CD8-positive, alpha-beta T cell (primary cell): ENCODE measurements at regions of chr17 and their contacts with region 1.

Region 1: GRCh38 chr17:76199469-76199868 is 40.8 kb downstream of the RNF157 start:
- DNase-seq: peak in 8 of 9 experiments; percentile 34 to 90 (median 65)
- ATAC-seq: peak; percentile 98
- H3K4me3 ChIP-seq: no peak overlapping the region
- H3K4me3 Mint-ChIP-seq: peak overlapping the region; percentile 6
- H3K27ac ChIP-seq: peak overlapping the region; percentile 29 to 46
- H3K27ac Mint-ChIP-seq: peak overlapping the region; percentile 93
- H3K4me1 ChIP-seq: peaks cover 75% of the 10 kb centered on the region
- H3K4me1 Mint-ChIP-seq: peaks cover 76% of the 10 kb centered on the region
- H3K27me3 ChIP-seq: no peaks in the 10 kb centered on the region
- H3K27me3 Mint-ChIP-seq: no peaks in the 10 kb centered on the region
- CTCF ChIP-seq: no peak

Region 2: DNA sequence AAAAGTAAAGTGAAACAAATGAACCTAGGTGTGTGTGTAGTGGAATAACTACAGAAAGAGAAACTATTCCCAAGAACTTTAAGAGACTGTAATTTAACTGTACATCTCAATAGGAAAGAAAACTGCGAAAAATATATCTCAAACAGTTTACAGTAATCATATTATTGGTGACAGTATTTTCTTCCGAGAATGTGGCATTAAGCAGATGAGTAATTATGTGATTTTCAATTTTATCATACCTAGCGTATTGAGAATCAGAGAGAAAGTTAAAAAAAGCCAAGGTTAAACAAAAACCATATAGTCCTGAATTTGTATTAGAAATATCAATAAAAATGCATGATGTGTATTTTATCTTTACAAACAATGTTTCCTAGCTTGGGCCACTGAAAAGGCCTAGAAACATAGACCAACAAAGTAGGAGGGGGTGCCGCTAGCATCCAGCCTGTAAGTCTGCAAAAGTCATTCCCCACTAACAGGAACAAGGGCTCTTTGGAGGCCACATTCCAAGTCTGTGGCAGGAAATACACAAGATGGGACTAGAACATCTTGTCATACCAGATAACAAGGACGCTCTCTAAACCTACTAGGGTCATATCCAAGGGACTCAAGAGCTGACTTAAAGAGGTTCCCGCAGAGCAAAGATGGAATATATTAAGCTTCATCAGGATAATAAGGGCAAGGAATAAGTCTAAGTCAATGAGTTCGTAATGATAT is 20.4 kb after region 1 on chr17:
- CTCF ChIA-PET with region 1: interaction called, 3 read pairs
- POLR2A ChIA-PET with region 1: interaction called, 3 read pairs
- intact Hi-C with region 1: loop called in 1 of 2 experiments (anchors 2 kb)
- DNase-seq: no peak
- ATAC-seq: no peak
- H3K4me3 ChIP-seq: no peak overlapping the region
- H3K4me3 Mint-ChIP-seq: no peak overlapping the region
- H3K27ac ChIP-seq: no peak overlapping the region
- H3K27ac Mint-ChIP-seq: peak overlapping the region; percentile 27
- H3K4me1 ChIP-seq: no peaks in the 10 kb centered on the region
- H3K4me1 Mint-ChIP-seq: peaks cover 43% of the 10 kb centered on the region
- H3K27me3 ChIP-seq: no peaks in the 10 kb centered on the region
- H3K27me3 Mint-ChIP-seq: no peaks in the 10 kb centered on the region
- CTCF ChIP-seq: no peak